CD8-positive, alpha-beta memory T cell (primary cell): ENCODE measurements at regions of chr12 and their contacts with region 1.

Region 1: GRCh38 chr12:6944381-6945186 is 762 bp downstream of the C12orf57 start:
- DNase-seq: peak; percentile 73 to 93 (median 84)
- H3K4me3 ChIP-seq: peak overlapping the region; percentile 72
- H3K4me3 Mint-ChIP-seq: peak overlapping the region; percentile 87 to 98 (median 94)
- H3K27ac ChIP-seq: peak overlapping the region; percentile 96
- H3K27ac Mint-ChIP-seq: peak overlapping the region; percentile 94 to 100 (median 99)
- H3K4me1 ChIP-seq: peaks cover 58% of the 10 kb centered on the region
- H3K4me1 Mint-ChIP-seq: peaks cover 60 to 67% (median 67%) of the 10 kb centered on the region in 3 donors
- H3K27me3 ChIP-seq: no peaks in the 10 kb centered on the region
- H3K27me3 Mint-ChIP-seq: peaks cover 0 to 5% of the 10 kb centered on the region in 2 donors

Region 2: GRCh38 chr12:6796576-6796975 is 148.0 kb before region 1 on chr12:
- CTCF ChIA-PET with region 1: no interaction called
- POLR2A ChIA-PET with region 1: no interaction called
- DNase-seq: no peak
- H3K4me3 ChIP-seq: no peak overlapping the region
- H3K4me3 Mint-ChIP-seq: no peak overlapping the region
- H3K27ac ChIP-seq: no peak overlapping the region
- H3K27ac Mint-ChIP-seq: peak overlapping the region in 2 of 8 donors; percentile 17 to 33
- H3K4me1 ChIP-seq: peaks cover 7% of the 10 kb centered on the region
- H3K4me1 Mint-ChIP-seq: peaks cover 10 to 18% (median 11%) of the 10 kb centered on the region in 3 donors
- H3K27me3 ChIP-seq: no peaks in the 10 kb centered on the region
- H3K27me3 Mint-ChIP-seq: peaks cover 19 to 26% of the 10 kb centered on the region in 2 donors

Region 3: DNA sequence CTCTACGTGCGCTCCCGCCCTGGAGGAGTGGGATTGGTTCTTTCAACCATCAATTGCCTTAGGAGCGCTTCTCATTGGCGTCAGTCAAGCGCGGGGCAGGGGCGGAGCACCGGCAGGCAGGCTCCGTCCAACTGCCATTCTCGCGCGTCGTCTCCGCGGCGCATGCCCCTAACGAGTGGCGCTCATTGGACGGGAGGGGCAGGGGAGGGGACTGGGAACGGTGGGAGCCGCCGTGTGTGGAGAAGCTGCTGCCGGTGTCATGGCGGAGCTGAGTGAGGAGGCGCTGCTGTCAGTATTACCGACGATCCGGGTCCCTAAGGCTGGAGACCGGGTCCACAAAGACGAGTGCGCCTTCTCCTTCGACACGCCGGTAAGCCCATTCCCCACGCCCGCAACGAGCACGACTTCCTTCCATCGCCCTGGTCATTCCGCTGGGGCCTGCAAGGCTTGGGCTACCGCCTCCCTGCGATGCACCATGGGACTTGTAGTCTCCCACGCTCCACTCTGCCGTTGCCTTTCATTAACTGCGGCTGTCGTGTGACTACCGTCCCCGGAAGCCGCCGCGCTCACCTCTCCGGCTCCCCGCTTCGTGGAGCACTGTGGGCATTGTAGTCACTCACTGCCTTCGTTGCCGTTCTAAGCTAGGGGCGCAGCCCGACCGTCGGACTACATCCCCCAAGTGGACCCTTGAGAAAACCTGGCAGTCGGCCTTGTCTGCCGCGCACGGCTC is 92.5 kb before region 1 on chr12 and contains the start of gene USP5:
- CTCF ChIA-PET with region 1: interaction called, 4 read pairs
- POLR2A ChIA-PET with region 1: interaction called, 18 read pairs
- DNase-seq: peak; percentile 97 to 99 (median 99)
- H3K4me3 ChIP-seq: peak within 1 kb of the TSS; percentile 97
- H3K4me3 Mint-ChIP-seq: peak within 1 kb of the TSS; percentile 86 to 99 (median 94)
- H3K27ac ChIP-seq: peak within 1 kb of the TSS; percentile 77
- H3K27ac Mint-ChIP-seq: peak within 1 kb of the TSS; percentile 99 to 100 (median 100)
- H3K4me1 ChIP-seq: peaks cover 18% of the 10 kb centered on the region
- H3K4me1 Mint-ChIP-seq: peaks cover 20 to 38% (median 20%) of the 10 kb centered on the region in 3 donors
- H3K27me3 ChIP-seq: no peaks in the 10 kb centered on the region
- H3K27me3 Mint-ChIP-seq: no peaks in the 10 kb centered on the region
- total RNA-seq, gene USP5: 154 TPM

Region 4: GRCh38 chr12:6890789-6891645 is 53.6 kb before region 1 on chr12:
- CTCF ChIA-PET with region 1: interaction called, 6 read pairs
- POLR2A ChIA-PET with region 1: interaction called, 14 read pairs
- DNase-seq: peak; percentile 97 to 100 (median 99)
- H3K4me3 ChIP-seq: peak overlapping the region; percentile 95
- H3K4me3 Mint-ChIP-seq: peak overlapping the region; percentile 81 to 93 (median 84)
- H3K27ac ChIP-seq: peak overlapping the region; percentile 92
- H3K27ac Mint-ChIP-seq: peak overlapping the region; percentile 89 to 98 (median 94)
- H3K4me1 ChIP-seq: peaks cover 12% of the 10 kb centered on the region
- H3K4me1 Mint-ChIP-seq: peaks cover 12 to 19% (median 12%) of the 10 kb centered on the region in 3 donors
- H3K27me3 ChIP-seq: no peaks in the 10 kb centered on the region
- H3K27me3 Mint-ChIP-seq: peaks cover 0 to 3% of the 10 kb centered on the region in 2 donors

Region 5: DNA sequence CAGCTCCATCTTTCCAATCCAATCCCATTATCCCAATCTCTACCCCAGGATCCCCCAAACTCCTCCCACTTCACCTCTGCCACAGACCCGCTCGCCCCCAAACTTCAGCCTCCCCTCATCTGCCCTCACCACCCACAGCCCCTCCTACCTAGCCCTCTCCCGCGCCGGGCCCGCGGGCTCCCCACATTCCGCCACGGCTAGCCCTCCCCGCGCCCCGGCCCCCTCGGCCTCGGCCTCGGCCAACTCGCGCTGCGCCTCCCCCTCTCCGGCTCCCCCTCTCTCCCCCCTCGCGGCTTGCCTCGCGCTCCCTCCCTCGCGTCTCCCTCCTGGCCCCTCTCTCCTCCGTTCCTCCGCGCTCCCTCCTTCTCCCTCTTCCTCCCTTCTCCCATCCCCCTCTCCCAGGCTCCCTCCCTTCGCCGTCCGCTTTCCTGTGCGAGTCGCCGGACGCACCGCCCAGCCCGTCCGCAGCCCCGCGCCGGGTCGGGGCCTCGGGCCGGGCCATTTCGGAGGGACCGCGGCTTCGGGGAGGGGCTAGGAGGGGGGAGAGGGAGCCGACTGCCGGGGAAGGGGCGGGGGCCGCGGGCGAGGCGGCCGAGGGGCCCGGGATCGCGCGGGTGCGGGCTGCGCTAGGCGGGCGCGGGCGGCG is 17.1 kb before region 1 on chr12 and contains the start of gene ATN1:
- CTCF ChIA-PET with region 1: interaction called, 88 read pairs
- POLR2A ChIA-PET with region 1: interaction called, 6 read pairs
- DNase-seq: peak; percentile 27 to 68 (median 38)
- H3K4me3 ChIP-seq: peak within 1 kb of the TSS; percentile 59
- H3K4me3 Mint-ChIP-seq: peak within 1 kb of the TSS; percentile 82 to 97 (median 92)
- H3K27ac ChIP-seq: peak within 1 kb of the TSS; percentile 65
- H3K27ac Mint-ChIP-seq: peak within 1 kb of the TSS; percentile 68 to 99 (median 93)
- H3K4me1 ChIP-seq: peaks cover 48% of the 10 kb centered on the region
- H3K4me1 Mint-ChIP-seq: peaks cover 32 to 57% (median 46%) of the 10 kb centered on the region in 3 donors
- H3K27me3 ChIP-seq: no peaks in the 10 kb centered on the region
- H3K27me3 Mint-ChIP-seq: no peaks in the 10 kb centered on the region
- total RNA-seq, gene ATN1: 54.8 to 60.4 TPM

Region 6: DNA sequence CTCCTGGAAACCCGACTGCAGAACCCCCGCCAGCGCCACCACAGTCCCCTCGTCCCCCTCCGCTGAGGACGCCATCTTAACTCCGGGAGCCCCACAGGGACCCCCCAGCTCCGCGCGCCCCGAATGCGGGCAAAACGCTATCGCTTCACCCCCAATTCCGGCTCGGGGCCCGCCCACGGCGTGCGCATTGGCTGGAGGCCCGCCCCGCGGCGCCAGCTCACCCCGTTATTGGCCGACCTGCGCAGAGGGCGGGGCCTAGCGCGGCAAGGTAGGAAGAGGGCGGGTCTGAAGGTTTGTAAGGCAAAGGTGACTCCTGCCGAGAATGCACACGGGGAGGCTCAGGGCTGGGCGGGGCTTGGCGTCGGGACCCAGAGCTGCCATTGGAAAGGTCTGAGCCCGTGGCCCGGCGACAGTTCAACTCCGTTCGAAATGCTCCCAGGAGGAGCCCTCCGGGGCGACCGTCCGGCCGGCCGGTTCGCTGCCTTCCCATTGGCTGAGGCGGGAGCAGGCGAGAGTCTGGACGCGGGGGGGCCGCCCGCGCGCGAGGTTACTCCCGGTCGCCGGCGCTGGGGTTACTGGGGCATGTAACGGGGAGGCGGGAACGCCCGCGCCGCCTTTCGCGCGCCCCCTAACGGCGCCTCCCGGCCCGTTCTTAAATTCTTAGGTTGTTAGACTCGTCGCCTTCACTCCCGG is 73.9 kb after region 1 on chr12 and contains the start of gene LPCAT3:
- CTCF ChIA-PET with region 1: interaction called, 27 read pairs
- POLR2A ChIA-PET with region 1: interaction called, 21 read pairs
- DNase-seq: peak; percentile 96 to 99 (median 98)
- H3K4me3 ChIP-seq: peak within 1 kb of the TSS; percentile 95
- H3K4me3 Mint-ChIP-seq: peak within 1 kb of the TSS; percentile 92 to 96 (median 94)
- H3K27ac ChIP-seq: peak within 1 kb of the TSS; percentile 86
- H3K27ac Mint-ChIP-seq: peak within 1 kb of the TSS; percentile 82 to 97 (median 92)
- H3K4me1 ChIP-seq: peaks cover 20% of the 10 kb centered on the region
- H3K4me1 Mint-ChIP-seq: peaks cover 24 to 39% (median 38%) of the 10 kb centered on the region in 3 donors
- H3K27me3 ChIP-seq: no peaks in the 10 kb centered on the region
- H3K27me3 Mint-ChIP-seq: no peaks in the 10 kb centered on the region
- total RNA-seq, gene LPCAT3: 20.4 to 22.1 TPM

Region 7: DNA sequence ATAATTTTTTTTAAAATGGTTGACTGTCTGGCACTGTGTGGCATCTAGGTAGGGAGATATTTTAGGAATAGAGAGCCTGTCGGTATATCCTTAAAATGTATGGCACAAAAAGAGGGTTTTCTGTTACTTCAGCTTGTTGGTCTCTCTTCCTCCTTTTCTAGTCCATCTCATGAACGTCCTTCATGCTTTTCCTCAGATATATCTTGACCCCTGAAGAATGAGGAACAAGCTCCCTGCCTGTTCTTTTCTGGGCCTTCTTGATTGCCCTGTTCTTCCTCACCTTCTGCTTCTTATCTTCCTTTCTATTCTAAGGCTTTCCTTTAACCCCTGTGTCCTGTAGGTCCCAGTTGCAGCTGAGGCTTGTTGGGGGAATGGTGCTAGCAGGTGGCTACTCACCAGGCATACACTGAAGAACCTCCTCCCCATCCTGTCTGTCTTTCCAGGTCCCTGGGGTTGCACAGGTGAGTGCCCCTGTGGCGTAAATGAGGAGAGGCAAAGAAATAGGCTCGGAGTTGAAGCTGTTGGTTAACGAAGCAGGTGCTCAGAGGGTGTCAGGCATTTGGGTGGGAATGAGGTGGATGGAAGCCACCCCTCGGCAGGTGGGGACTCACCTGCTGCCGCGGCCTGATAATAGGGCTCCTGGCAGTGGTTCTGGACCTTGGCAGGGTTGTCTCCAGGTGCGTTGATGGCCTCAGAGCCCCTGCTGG is 154.9 kb after region 1 on chr12:
- CTCF ChIA-PET with region 1: no interaction called
- POLR2A ChIA-PET with region 1: no interaction called
- DNase-seq: no peak
- H3K4me3 ChIP-seq: no peak overlapping the region
- H3K4me3 Mint-ChIP-seq: no peak overlapping the region
- H3K27ac ChIP-seq: no peak overlapping the region
- H3K27ac Mint-ChIP-seq: peak overlapping the region in 2 of 8 donors; percentile 7 to 79
- H3K4me1 ChIP-seq: no peaks in the 10 kb centered on the region
- H3K4me1 Mint-ChIP-seq: peaks cover 10 to 30% (median 17%) of the 10 kb centered on the region in 3 donors
- H3K27me3 ChIP-seq: no peaks in the 10 kb centered on the region
- H3K27me3 Mint-ChIP-seq: no peaks in the 10 kb centered on the region

Region 8: DNA sequence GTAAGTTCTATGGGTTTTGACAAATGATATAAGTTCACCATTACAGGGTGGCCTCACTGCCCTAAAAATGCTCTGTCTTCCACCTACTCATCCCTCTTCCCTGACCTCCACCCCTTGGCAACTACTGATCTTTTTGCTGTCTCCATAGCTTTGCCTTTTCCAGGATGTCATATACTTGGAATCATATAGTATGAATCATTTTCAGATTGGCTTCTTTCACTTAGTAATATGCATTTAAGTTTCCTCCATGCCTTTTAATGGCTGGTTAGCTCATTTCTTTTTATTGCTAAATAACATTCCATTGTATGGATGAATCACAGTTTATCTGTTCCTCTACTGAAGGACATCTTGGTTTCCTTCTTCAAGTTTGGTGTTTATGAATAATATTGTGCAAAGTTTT is 230.9 kb after region 1 on chr12:
- CTCF ChIA-PET with region 1: no interaction called
- POLR2A ChIA-PET with region 1: interaction called, 11 read pairs
- DNase-seq: no peak
- H3K4me3 ChIP-seq: no peak overlapping the region
- H3K4me3 Mint-ChIP-seq: no peak overlapping the region
- H3K27ac ChIP-seq: no peak overlapping the region
- H3K27ac Mint-ChIP-seq: no peak overlapping the region
- H3K4me1 ChIP-seq: no peaks in the 10 kb centered on the region
- H3K4me1 Mint-ChIP-seq: no peaks in the 10 kb centered on the region
- H3K27me3 ChIP-seq: peaks cover 10% of the 10 kb centered on the region
- H3K27me3 Mint-ChIP-seq: peaks cover 18 to 69% of the 10 kb centered on the region in 2 donors